Heart left ventricle (tissue), 16 donors: ENCODE measurements at regions of chr2 and their contacts with region 1.

Region 1: GRCh38 chr2:227106845-227107759 is 56.9 kb downstream of the COL4A4 start:
- DNase-seq: peak in 1 of 5 donors; percentile 22
- ATAC-seq: peak in 3 of 4 donors; percentile 37 to 66 (median 59)
- H3K4me3 ChIP-seq: no peak overlapping the region
- H3K27ac ChIP-seq: no peak overlapping the region
- H3K4me1 ChIP-seq: no peaks in the 10 kb centered on the region
- H3K27me3 ChIP-seq: no peaks in the 10 kb centered on the region
- CTCF ChIP-seq: peak; percentile 46 to 64 (median 56)
- POLR2A ChIP-seq: no peak

Region 2: DNA sequence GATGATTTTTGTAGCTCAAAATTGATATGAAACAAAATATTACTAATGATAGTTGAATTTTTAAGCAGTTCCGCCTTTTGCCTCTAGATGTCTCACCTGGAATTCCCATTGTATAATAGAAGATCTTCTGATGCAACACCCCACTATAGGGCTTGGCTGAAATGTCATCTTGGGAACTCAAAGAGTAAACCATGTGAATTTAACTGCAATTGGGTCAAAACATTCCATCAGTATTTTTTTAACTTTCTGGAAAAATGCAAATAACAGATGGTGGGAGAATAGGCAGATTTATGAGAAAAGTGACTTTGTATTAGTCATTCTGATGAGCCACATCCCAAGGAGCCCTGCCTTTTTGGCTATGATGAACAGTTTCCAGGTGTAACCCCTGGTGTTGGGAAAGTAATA is 1217.7 kb before region 1 on chr2:
- intact Hi-C with region 1: loop called in 1 of 10 experiments (anchors 5 kb)
- DNase-seq: peak in 1 of 5 donors; percentile 7
- ATAC-seq: peak in 2 of 4 donors; percentile 52 to 64
- H3K4me3 ChIP-seq: no peak overlapping the region
- H3K27ac ChIP-seq: no peak overlapping the region
- H3K4me1 ChIP-seq: no peaks in the 10 kb centered on the region
- H3K27me3 ChIP-seq: no peaks in the 10 kb centered on the region
- CTCF ChIP-seq: peak; percentile 49 to 86 (median 76)
- POLR2A ChIP-seq: no peak

Region 3: DNA sequence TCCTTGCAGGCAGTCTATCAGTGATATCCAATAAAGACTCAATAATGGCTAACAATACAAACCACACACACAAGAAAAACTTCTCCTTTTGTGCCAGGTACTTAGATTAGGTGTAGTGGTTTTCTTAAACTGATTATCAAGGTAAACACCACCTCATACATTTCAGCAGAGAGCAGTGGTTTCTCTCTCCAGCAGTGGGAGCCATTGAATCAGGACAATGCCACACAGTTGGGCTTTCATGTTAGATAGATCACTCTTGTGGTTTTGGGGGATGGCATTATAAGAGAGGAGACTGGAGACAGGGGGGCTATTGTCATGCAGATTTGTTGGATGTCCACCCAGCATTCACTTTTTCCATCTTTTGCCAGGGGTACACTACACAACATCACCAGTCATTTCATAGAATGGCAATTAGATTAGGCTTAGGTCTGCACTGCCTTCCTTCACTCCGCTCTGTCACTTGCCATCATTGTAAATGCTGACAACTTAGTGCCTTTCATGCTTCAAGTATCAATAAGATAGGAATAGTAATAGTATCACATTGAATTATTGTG is 293.9 kb before region 1 on chr2:
- intact Hi-C with region 1: loop called in 3 of 10 experiments (anchors 10 kb)
- DNase-seq: no peak
- ATAC-seq: no peak
- H3K4me3 ChIP-seq: no peak overlapping the region
- H3K27ac ChIP-seq: no peak overlapping the region
- H3K4me1 ChIP-seq: no peaks in the 10 kb centered on the region
- H3K27me3 ChIP-seq: peaks cover 0 to 3% (median 0%) of the 10 kb centered on the region in 9 donors
- CTCF ChIP-seq: peak in 3 of 12 donors; percentile 13 to 21 (median 20)
- POLR2A ChIP-seq: no peak

Region 4: GRCh38 chr2:227052879-227053278 is 54.2 kb before region 1 on chr2:
- intact Hi-C with region 1: no loop called
- DNase-seq: no peak
- ATAC-seq: no peak
- H3K4me3 ChIP-seq: no peak overlapping the region
- H3K27ac ChIP-seq: no peak overlapping the region
- H3K4me1 ChIP-seq: no peaks in the 10 kb centered on the region
- H3K27me3 ChIP-seq: no peaks in the 10 kb centered on the region
- CTCF ChIP-seq: no peak
- POLR2A ChIP-seq: no peak